ENCODE measurements at regions of chr5 and their contacts with region 1.

Region 1: DNA sequence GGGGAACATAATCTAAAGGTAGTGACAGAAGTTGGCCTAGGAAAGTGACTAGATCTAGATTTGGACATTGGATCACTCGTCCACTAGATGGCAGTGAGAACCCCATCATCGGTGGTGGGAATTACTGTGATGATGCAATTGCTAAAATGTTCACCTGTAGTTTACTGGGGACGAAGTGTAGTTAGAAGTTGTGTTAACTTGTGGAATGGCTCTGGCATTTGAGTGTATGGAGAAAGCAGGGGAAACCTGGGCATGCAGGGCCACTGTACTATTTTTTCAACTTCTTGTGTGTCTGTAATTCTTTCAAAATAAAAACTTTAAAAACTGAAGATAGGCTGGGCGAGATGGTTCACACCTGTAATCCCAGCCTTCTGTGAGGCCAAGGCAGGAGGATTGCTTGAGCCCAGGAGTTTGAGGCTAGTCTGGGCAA is 75.5 kb downstream of the PHAX start:
- DNase-seq: peak; percentile 60 to 71
- H3K4me3 ChIP-seq: no peak overlapping the region
- H3K4me3 Mint-ChIP-seq: peak overlapping the region; percentile 18
- H3K27ac Mint-ChIP-seq: peak overlapping the region; percentile 40
- H3K4me1 ChIP-seq: no peaks in the 10 kb centered on the region
- H3K4me1 Mint-ChIP-seq: peaks cover 7% of the 10 kb centered on the region
- H3K27me3 ChIP-seq: no peaks in the 10 kb centered on the region
- H3K27me3 Mint-ChIP-seq: no peaks in the 10 kb centered on the region
- CTCF ChIP-seq: peak; percentile 78 to 85

Region 2: GRCh38 chr5:126808521-126808988 is 132.3 kb after region 1 on chr5:
- CTCF ChIA-PET with region 1: interaction called, 5 read pairs
- POLR2A ChIA-PET with region 1: no interaction called
- intact Hi-C with region 1: loop called (anchors 1 kb)
- DNase-seq: peak in 1 of 2 experiments; percentile 35
- H3K4me3 ChIP-seq: no peak overlapping the region
- H3K4me3 Mint-ChIP-seq: no peak overlapping the region
- H3K27ac Mint-ChIP-seq: no peak overlapping the region
- H3K4me1 ChIP-seq: no peaks in the 10 kb centered on the region
- H3K4me1 Mint-ChIP-seq: no peaks in the 10 kb centered on the region
- H3K27me3 ChIP-seq: no peaks in the 10 kb centered on the region
- H3K27me3 Mint-ChIP-seq: no peaks in the 10 kb centered on the region
- CTCF ChIP-seq: peak; percentile 43 to 49

Region 3: DNA sequence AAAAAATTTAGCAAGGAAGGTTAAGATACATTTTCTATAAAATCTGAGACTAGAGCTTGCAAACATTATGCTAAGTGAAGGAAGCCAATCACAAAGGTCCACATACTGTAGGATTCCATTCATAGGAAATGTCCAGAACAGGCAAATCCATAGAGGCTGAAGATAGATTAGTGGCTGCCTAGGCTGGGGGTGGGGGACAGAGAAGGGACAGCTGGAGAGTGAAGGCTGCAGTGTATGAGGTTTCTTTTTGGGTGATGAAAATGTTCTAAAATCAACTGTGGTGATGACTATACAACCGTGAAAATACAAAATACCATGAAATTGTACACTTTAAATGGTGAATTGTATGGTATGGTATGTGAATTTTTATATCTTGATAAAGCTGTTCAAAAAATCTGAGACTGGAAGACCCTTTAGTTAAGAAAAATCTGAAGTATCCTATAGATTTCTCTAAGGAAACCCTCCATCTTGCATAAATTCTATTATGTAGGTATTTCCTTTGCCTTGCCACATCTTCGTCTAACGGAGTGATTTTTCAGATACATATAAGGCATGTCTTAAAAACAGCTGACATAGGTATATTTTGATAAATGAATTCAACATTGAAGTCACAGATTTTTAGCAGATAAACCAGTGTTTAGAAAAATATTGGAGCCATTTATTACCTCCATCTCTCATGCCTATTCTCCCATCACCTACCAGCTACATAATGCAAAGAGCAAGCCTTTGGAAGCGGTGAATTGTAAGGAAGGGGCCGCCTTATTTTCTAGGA is 221.8 kb after region 1 on chr5:
- CTCF ChIA-PET with region 1: no interaction called
- POLR2A ChIA-PET with region 1: no interaction called
- intact Hi-C with region 1: no loop called
- DNase-seq: no peak
- H3K4me3 ChIP-seq: no peak overlapping the region
- H3K4me3 Mint-ChIP-seq: no peak overlapping the region
- H3K27ac Mint-ChIP-seq: no peak overlapping the region
- H3K4me1 ChIP-seq: no peaks in the 10 kb centered on the region
- H3K4me1 Mint-ChIP-seq: no peaks in the 10 kb centered on the region
- H3K27me3 ChIP-seq: no peaks in the 10 kb centered on the region
- H3K27me3 Mint-ChIP-seq: no peaks in the 10 kb centered on the region
- CTCF ChIP-seq: no peak

Region 4: DNA sequence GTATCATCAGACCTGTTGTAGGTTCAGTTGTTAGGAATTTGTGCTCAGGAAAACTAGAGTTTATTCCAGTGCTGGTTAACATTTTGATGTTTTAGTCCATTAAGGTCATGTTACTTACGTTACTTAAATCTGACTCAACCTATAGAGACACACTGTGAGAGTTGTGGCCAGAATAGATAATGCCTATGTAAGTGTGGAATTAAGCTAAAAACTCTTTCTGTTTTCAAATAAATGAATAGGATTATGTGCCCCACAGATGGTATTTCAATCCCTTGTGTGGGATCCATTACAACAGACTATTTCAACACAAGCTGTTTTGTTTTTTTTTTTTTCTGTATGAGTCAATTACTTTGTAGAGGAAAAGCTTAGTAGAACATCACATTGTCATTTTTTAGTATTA is 682.5 kb after region 1 on chr5:
- CTCF ChIA-PET with region 1: no interaction called
- POLR2A ChIA-PET with region 1: no interaction called
- intact Hi-C with region 1: no loop called
- DNase-seq: no peak
- H3K4me3 ChIP-seq: no peak overlapping the region
- H3K4me3 Mint-ChIP-seq: no peak overlapping the region
- H3K27ac Mint-ChIP-seq: no peak overlapping the region
- H3K4me1 ChIP-seq: no peaks in the 10 kb centered on the region
- H3K4me1 Mint-ChIP-seq: no peaks in the 10 kb centered on the region
- H3K27me3 ChIP-seq: no peaks in the 10 kb centered on the region
- H3K27me3 Mint-ChIP-seq: peaks cover 8% of the 10 kb centered on the region
- CTCF ChIP-seq: no peak

Measured in Caco-2 (cell line).